Astrocyte of the cerebellum (primary cell): ENCODE measurements at regions of chr10 and their contacts with region 1.

Region 1: DNA sequence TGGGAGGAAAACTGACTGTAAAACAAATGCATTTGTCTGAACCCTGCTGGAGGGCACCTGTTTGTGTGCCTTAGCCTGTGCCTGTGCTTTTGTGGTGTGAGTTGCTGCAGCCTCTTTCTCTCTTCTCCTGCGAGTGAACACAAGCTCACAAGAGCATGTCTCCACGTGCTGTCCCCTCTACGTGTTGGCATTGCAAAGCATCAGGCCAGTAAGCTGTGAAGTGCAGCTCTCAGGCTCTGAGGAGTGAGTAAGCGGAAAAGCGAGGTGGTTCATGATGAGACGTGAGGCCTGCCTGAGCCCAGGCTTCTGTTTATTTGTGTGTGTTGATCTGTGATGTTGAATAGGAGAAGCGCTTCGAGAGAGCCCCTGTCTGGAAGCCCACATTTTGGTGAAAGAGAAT is 85.6 kb upstream of the PDCD4 start:
- DNase-seq: no peak
- H3K4me3 ChIP-seq: no peak overlapping the region
- CTCF ChIP-seq: no peak

Region 2: DNA sequence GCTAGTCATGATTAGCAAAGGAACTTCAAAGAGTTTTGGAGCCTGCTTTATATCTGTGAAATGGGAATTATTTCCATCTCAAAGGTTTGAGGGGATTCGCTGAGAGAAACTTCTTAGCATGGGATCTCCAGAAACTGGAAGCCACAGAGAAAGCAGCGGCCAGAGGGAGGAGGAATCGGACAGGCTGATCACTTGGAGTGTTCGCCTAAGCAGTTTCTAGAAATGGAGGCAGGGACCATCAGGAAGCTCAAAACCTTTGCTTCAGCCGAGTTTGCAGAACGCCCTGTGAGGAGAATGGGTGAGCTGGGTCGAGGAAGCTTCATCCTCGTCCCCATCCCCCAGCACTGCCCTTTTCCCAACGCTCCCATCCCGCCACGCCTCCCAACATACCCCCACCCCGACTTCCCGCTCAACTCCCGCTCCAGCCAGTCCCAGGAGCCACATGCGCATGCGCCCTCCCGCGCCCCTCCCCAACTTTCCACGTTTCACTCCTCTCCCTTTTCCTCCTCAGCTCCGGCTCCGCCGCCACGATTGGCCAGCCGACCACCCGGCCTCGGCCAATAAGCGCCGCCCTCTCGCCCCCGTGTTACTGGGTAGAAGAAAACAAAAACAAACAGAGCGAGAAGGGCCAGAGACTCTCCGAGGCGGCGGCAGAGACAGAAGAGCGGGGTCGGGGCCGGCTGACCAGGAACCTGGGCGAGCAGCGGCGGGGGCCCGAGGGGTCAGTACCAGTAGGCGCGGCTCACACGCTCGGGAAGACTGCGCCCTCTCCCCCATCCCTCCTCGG is 85.3 kb after region 1 on chr10 and contains the start of gene PDCD4:
- in situ Hi-C with region 1: loop called (anchors 5 kb)
- DNase-seq: peak; percentile 95
- H3K4me3 ChIP-seq: peak within 1 kb of the TSS; percentile 86
- CTCF ChIP-seq: no peak

Region 3: GRCh38 chr10:110881905-110882304 is 95.7 kb after region 1 on chr10:
- in situ Hi-C with region 1: no loop called
- DNase-seq: no peak
- H3K4me3 ChIP-seq: no peak overlapping the region
- CTCF ChIP-seq: no peak